HCT116 (cell line): ENCODE measurements at regions of chrX and their contacts with region 1.

Region 1: GRCh38 chrX:106874075-106874474 is 29.1 kb downstream of the RIPPLY1 start:
- DNase-seq: no peak
- ATAC-seq: no peak
- H3K4me3 ChIP-seq: no peak overlapping the region
- H3K27ac ChIP-seq: no peak overlapping the region
- H3K4me1 ChIP-seq: no peaks in the 10 kb centered on the region
- H3K27me3 ChIP-seq: no peaks in the 10 kb centered on the region
- CTCF ChIP-seq: peak; percentile 23 to 54 (median 36); a peak in 3 of 6 replicates
- POLR2A ChIP-seq: no peak
- RAD21 ChIP-seq: peak; percentile 59

Region 2: DNA sequence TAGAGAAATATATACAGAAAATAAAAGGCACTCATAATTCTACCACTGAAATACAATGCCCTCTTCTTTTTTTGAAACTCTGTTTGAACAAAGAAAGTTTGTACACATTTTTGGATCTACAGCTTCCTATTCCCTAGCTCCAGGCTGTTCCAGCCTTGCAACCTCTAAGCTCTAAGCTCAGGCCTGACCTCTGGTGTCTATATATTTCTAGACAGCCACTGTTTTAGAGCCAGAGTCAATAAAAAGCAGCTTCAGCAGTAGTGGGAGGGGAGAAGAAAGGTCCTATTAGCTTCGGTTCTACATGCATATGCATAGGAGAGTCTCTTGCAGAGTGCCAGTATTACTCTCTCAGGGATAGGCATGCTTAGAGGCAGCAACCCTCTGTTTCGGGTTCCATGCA is 85.8 kb after region 1 on chrX:
- CTCF ChIA-PET with region 1: interaction called, 14 read pairs
- POLR2A ChIA-PET with region 1: no interaction called
- RAD21 ChIA-PET with region 1: interaction called, 3 read pairs
- intact Hi-C with region 1: no loop called
- DNase-seq: no peak
- ATAC-seq: peak; percentile 64
- H3K4me3 ChIP-seq: no peak overlapping the region
- H3K27ac ChIP-seq: no peak overlapping the region
- H3K4me1 ChIP-seq: peaks cover 0 to 3% of the 10 kb centered on the region in 2 experiments; a peak in 2 of 4 replicates
- H3K27me3 ChIP-seq: no peaks in the 10 kb centered on the region
- CTCF ChIP-seq: peak; percentile 25 to 31 (median 26); a peak in 4 of 6 replicates
- POLR2A ChIP-seq: no peak
- RAD21 ChIP-seq: peak; percentile 46